Ascending aorta (tissue), 2 donors: ENCODE measurements at regions of chr17 and their contacts with region 1.

Region 1: GRCh38 chr17:42760652-42761581 is at the start of gene RAMP2:
- DNase-seq: no peak
- H3K4me3 ChIP-seq: peak within 1 kb of the TSS; percentile 71 to 78
- H3K27ac ChIP-seq: peak within 1 kb of the TSS in 1 of 2 donors; percentile 55
- H3K4me1 ChIP-seq: peaks cover 8 to 10% of the 10 kb centered on the region in 2 donors
- H3K27me3 ChIP-seq: peaks cover 13% of the 10 kb centered on the region
- CTCF ChIP-seq: no peak
- total RNA-seq, gene RAMP2: 80.5 TPM

Region 2: DNA sequence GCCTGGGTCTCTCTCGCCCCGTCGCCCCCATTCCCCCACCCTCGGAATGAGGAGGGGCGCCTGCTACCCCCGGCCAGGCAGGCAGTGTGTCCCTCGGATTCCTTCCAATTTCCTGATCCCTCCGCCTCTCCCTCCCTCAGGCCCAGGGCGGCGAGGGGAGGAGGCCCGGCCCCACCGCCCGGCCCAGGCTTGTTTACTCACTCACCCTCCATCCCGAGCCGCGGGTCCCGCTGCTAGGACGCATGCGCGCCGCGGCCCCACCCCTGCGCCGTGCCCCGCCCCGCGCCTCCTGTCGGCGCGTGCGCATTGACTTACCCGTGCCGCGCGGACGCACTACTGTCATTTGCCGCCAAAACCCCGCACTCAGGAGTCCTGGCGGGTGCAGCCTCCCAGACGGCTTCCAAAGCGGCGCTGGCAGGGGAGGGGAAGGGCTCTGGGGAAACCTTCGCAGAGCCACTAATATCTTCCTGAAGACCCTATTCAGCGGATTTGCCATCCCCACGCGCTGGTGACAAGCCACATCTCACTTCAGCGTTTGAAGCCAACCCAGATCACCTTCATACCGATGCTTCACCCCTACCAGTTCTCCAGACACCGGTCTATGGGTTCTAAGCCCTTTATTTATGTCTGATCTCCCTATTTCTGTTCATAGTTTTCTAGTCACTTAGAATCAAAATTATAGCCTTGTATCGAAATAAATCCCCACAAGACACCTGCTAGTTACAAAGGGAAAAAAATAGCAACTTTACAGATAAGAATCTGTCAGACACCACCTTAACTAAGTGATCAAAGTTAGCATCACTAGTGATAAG is 15.9 kb before region 1 on chr17 and contains the start of gene EZH1:
- intact Hi-C with region 1: loop called (anchors 2 kb)
- DNase-seq: peak; percentile 61 to 93
- H3K4me3 ChIP-seq: peak within 1 kb of the TSS; percentile 89 to 98
- H3K27ac ChIP-seq: peak within 1 kb of the TSS; percentile 93 to 95
- H3K4me1 ChIP-seq: peaks cover 0 to 11% of the 10 kb centered on the region in 2 donors
- H3K27me3 ChIP-seq: no peaks in the 10 kb centered on the region
- CTCF ChIP-seq: peak in 1 of 3 experiments; percentile 16
- total RNA-seq, gene EZH1: 169 TPM

Region 3: GRCh38 chr17:42920922-42921321 is 160.0 kb after region 1 on chr17:
- intact Hi-C with region 1: no loop called
- DNase-seq: no peak
- H3K4me3 ChIP-seq: no peak overlapping the region
- H3K27ac ChIP-seq: no peak overlapping the region
- H3K4me1 ChIP-seq: peaks cover 0 to 9% of the 10 kb centered on the region in 2 donors
- H3K27me3 ChIP-seq: no peaks in the 10 kb centered on the region
- CTCF ChIP-seq: no peak